CD8-positive, alpha-beta T cell (primary cell): ENCODE measurements at regions of chr13 and their contacts with region 1.

Region 1: DNA sequence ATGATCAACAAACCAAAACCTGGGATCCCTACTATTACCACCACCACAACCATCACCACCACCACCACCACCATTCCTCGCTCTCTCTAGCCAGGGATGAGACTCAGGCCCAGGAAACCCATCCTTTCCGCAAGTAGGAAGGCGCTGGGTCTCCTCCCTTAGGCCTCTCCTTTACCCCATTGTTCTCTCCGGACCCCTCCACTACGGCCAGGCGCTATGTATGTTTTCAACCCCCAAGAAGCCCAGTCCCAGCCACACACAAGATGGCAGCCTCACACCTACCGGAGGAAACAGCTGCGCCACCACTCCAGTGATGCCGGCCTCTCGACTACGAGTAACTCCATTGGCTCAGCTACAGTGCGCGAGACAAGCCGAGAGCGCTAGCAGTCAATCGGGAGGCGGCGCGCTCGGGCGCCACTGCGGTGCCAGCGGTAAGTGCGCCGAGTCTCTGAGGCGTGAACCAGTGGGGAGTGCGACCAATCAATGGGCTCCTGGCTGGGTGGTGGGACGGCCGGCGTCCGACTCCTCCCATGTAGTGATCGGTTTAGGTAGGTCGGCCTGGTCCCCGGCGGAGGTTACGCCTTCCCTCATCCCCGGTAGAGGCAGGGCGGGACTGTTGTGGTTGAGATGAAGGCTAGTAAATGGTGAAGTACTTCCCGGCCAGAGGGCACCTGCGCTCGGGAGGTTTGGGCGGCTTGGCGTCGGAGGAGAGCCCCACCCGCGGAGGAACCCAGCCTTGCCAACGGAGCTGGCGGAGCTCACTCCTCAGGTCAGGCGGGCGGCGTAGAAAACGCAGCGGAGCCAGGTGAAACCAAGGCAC is at the starts of genes CAB39L and SETDB2:
- DNase-seq: peak; percentile 97 to 100 (median 99)
- ATAC-seq: peak; percentile 89
- H3K4me3 ChIP-seq: peak within 1 kb of the TSS; percentile 72 to 76
- H3K4me3 Mint-ChIP-seq: peak within 1 kb of the TSS; percentile 93
- H3K27ac ChIP-seq: peak within 1 kb of the TSS; percentile 91 to 93
- H3K27ac Mint-ChIP-seq: peak within 1 kb of the TSS; percentile 98
- H3K4me1 ChIP-seq: peaks cover 42% of the 10 kb centered on the region
- H3K4me1 Mint-ChIP-seq: peaks cover 51% of the 10 kb centered on the region
- H3K27me3 ChIP-seq: no peaks in the 10 kb centered on the region
- H3K27me3 Mint-ChIP-seq: peaks cover 2% of the 10 kb centered on the region
- CTCF ChIP-seq: no peak
- total RNA-seq, gene CAB39L: 1.6 to 2.1 TPM
- total RNA-seq, gene SETDB2: 8.4 to 9.3 TPM

Region 2: DNA sequence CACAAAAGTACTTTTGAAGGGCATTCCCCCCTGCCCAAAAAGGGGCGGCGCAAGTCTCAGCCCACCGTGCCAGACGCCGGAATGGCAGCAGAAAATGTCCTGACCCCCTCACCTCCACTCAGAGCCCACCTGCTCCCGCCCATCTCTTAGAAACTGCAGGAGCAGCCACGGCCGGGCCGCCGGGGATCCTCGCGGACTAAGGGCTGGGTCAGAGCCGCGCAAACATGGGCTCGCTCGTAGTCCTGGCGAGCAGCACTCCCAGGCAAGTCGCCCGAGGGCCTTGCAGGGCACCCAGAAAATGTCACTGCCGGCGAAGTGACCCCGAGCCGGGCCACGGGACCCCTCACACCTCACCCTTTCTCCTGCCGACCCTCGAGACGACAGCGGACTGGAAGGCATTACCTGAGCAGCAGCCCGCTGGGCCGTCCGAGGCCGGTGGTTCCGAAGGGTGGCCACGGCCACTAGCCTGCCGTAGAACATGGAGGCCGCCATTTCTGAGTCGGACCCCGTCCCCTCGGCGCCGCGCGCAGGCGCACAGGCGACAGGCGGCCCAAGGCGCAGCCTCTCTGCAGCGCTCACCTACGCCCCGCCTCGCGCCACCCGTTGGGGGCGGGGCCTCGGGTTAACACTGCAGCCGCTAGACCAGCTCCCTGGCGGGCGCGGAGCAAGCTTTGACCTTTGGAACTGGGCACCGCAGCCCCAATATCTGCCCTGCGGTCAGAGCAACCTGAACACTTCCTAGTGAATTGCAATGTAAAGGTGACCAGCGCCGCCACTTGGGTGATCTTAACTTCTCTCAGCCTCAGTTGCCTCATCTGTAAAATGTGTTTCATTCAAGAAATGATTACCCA is 1442.9 kb before region 1 on chr13 and contains the start of gene SUCLA2:
- CTCF ChIA-PET with region 1: no interaction called
- POLR2A ChIA-PET with region 1: no interaction called
- intact Hi-C with region 1: loop called in 1 of 2 experiments (anchors 10 kb)
- DNase-seq: peak; percentile 77 to 93 (median 88)
- ATAC-seq: peak; percentile 100
- H3K4me3 ChIP-seq: peak within 1 kb of the TSS; percentile 99
- H3K4me3 Mint-ChIP-seq: peak within 1 kb of the TSS; percentile 95
- H3K27ac ChIP-seq: peak within 1 kb of the TSS; percentile 72 to 81
- H3K27ac Mint-ChIP-seq: peak within 1 kb of the TSS; percentile 91
- H3K4me1 ChIP-seq: peaks cover 16% of the 10 kb centered on the region
- H3K4me1 Mint-ChIP-seq: peaks cover 35% of the 10 kb centered on the region
- H3K27me3 ChIP-seq: no peaks in the 10 kb centered on the region
- H3K27me3 Mint-ChIP-seq: no peaks in the 10 kb centered on the region
- CTCF ChIP-seq: no peak
- total RNA-seq, gene SUCLA2: 20.8 to 22.9 TPM

Region 3: DNA sequence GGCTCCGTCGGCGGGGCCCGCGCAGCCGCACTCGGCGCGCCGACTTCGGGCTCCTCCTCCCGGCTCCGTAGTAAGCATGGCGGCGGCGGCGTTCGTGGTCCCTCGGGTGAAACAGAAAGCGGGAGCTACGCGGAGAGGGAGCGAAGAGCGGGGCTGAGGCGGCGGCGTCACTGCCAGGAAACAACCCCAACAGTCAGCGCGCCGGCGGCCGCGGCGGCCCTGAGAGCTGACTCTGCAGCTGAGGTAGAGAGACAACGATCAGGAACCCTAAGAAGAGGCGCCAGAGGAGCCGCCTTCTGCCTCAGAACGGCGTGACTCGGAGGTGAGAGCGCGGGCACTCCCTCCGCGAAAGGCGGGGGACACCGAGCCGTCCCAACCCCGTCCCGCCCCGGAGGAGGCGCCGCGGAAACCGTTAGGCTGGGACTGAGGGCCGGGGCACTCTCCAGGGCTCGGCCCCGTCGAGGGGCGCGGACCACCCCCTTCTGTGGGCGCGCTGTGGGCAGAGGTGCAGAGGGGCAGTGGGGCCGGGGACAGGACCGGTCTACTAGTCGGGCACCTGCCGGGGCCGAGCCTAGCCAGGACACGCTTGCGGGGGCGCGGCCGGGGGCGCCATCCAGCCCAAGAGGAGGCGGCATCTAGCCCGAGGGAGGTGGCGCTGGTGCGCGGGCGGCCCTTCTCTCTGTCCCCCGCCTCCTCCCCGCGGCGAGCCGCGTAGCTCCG is 467.9 kb before region 1 on chr13 and contains the start of gene FNDC3A:
- CTCF ChIA-PET with region 1: no interaction called
- POLR2A ChIA-PET with region 1: interaction called, 6 read pairs
- intact Hi-C with region 1: loop called (anchors 2 to 5 kb)
- DNase-seq: peak; percentile 70 to 93 (median 83)
- ATAC-seq: peak; percentile 70
- H3K4me3 ChIP-seq: peak within 1 kb of the TSS; percentile 79 to 80
- H3K4me3 Mint-ChIP-seq: peak within 1 kb of the TSS; percentile 97
- H3K27ac ChIP-seq: peak within 1 kb of the TSS; percentile 79 to 91
- H3K27ac Mint-ChIP-seq: peak within 1 kb of the TSS; percentile 99
- H3K4me1 ChIP-seq: peaks cover 33% of the 10 kb centered on the region
- H3K4me1 Mint-ChIP-seq: peaks cover 42% of the 10 kb centered on the region
- H3K27me3 ChIP-seq: no peaks in the 10 kb centered on the region
- H3K27me3 Mint-ChIP-seq: no peaks in the 10 kb centered on the region
- CTCF ChIP-seq: no peak
- total RNA-seq, gene FNDC3A: 27.0 to 27.7 TPM

Region 4: DNA sequence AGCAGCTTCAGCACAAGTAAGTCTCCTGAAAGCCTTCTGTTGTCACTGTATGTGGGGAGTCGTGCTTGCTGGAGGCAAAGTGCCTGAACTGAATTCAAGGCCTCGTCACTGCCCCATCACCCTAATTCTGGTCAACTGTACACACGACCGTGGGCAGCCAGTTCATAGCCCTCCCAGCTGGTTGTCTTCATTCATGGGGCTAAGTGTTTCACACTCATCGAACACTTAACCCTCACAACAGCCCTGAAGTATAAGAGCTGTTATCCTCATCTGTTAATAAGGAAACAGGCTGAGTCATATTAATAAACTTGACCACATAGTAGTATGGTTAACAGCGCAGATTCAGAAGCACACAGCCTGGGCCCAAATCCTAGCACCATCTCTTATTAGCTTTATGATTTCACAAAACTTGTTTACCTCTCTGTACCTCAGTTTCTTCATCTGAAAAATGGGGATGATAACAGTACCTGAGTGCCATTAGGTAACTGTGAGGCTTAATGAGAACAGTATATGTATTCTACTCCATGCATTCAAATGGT is 129.5 kb before region 1 on chr13:
- CTCF ChIA-PET with region 1: no interaction called
- POLR2A ChIA-PET with region 1: no interaction called
- intact Hi-C with region 1: no loop called
- DNase-seq: no peak
- ATAC-seq: no peak
- H3K4me3 ChIP-seq: no peak overlapping the region
- H3K4me3 Mint-ChIP-seq: no peak overlapping the region
- H3K27ac ChIP-seq: no peak overlapping the region
- H3K27ac Mint-ChIP-seq: no peak overlapping the region
- H3K4me1 ChIP-seq: no peaks in the 10 kb centered on the region
- H3K4me1 Mint-ChIP-seq: no peaks in the 10 kb centered on the region
- H3K27me3 ChIP-seq: no peaks in the 10 kb centered on the region
- H3K27me3 Mint-ChIP-seq: no peaks in the 10 kb centered on the region
- CTCF ChIP-seq: no peak

Region 5: GRCh38 chr13:49454388-49455006 is 10.6 kb after region 1 on chr13:
- CTCF ChIA-PET with region 1: interaction called, 4 read pairs
- POLR2A ChIA-PET with region 1: interaction called, 15 read pairs
- intact Hi-C with region 1: loop called in 1 of 2 experiments (anchors 1 kb)
- DNase-seq: peak in 2 of 9 experiments; percentile 27 to 54
- ATAC-seq: peak; percentile 77
- H3K4me3 ChIP-seq: no peak overlapping the region
- H3K4me3 Mint-ChIP-seq: peak overlapping the region; percentile 40
- H3K27ac ChIP-seq: peak overlapping the region in 1 of 2 experiments; percentile 41
- H3K27ac Mint-ChIP-seq: peak overlapping the region; percentile 61
- H3K4me1 ChIP-seq: peaks cover 11% of the 10 kb centered on the region
- H3K4me1 Mint-ChIP-seq: peaks cover 44% of the 10 kb centered on the region
- H3K27me3 ChIP-seq: no peaks in the 10 kb centered on the region
- H3K27me3 Mint-ChIP-seq: no peaks in the 10 kb centered on the region
- CTCF ChIP-seq: no peak

Region 6: DNA sequence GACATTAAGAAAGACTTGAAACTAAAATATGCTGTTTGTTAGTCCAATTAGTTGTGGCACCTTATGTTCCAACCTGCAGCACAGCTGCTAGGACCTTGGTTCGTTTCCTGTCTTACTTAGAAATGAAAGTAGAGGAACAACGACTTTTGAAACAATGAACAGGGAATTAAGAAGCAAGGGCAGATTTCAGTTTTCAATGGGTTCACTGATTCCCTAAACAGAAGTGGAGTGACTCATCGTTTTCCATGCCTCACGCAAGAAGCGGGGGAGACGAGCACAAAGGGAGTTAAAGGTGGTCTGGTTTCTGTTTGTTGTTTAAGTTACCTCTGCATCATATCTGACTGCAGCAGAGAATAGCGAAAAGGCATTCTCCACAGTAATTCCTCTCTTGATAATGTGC is 96.6 kb after region 1 on chr13:
- CTCF ChIA-PET with region 1: no interaction called
- POLR2A ChIA-PET with region 1: interaction called, 10 read pairs
- intact Hi-C with region 1: no loop called
- DNase-seq: peak in 3 of 9 experiments; percentile 3 to 48 (median 16)
- ATAC-seq: peak; percentile 42
- H3K4me3 ChIP-seq: peak overlapping the region; percentile 10 to 23
- H3K4me3 Mint-ChIP-seq: peak overlapping the region; percentile 79
- H3K27ac ChIP-seq: peak overlapping the region in 1 of 2 experiments; percentile 46
- H3K27ac Mint-ChIP-seq: peak overlapping the region; percentile 89
- H3K4me1 ChIP-seq: peaks cover 15% of the 10 kb centered on the region
- H3K4me1 Mint-ChIP-seq: peaks cover 18% of the 10 kb centered on the region
- H3K27me3 ChIP-seq: no peaks in the 10 kb centered on the region
- H3K27me3 Mint-ChIP-seq: no peaks in the 10 kb centered on the region
- CTCF ChIP-seq: no peak

Region 7: GRCh38 chr13:49792550-49793324 is 348.8 kb after region 1 on chr13 and contains the start of gene KPNA3:
- CTCF ChIA-PET with region 1: no interaction called
- POLR2A ChIA-PET with region 1: interaction called, 29 read pairs
- intact Hi-C with region 1: loop called in 1 of 2 experiments (anchors 2 kb)
- DNase-seq: peak; percentile 92 to 98 (median 96)
- ATAC-seq: peak; percentile 91
- H3K4me3 ChIP-seq: peak within 1 kb of the TSS; percentile 83 to 99
- H3K4me3 Mint-ChIP-seq: peak within 1 kb of the TSS; percentile 95
- H3K27ac ChIP-seq: peak within 1 kb of the TSS; percentile 79 to 89
- H3K27ac Mint-ChIP-seq: peak within 1 kb of the TSS; percentile 96
- H3K4me1 ChIP-seq: peaks cover 21% of the 10 kb centered on the region
- H3K4me1 Mint-ChIP-seq: peaks cover 34% of the 10 kb centered on the region
- H3K27me3 ChIP-seq: peaks cover 0 to 7% of the 10 kb centered on the region in 2 experiments
- H3K27me3 Mint-ChIP-seq: peaks cover 9% of the 10 kb centered on the region
- CTCF ChIP-seq: no peak
- total RNA-seq, gene KPNA3: 22.3 to 23.5 TPM

Region 8: GRCh38 chr13:50026788-50027473 is 583.0 kb after region 1 on chr13:
- CTCF ChIA-PET with region 1: no interaction called
- POLR2A ChIA-PET with region 1: no interaction called
- intact Hi-C with region 1: no loop called
- DNase-seq: no peak
- ATAC-seq: no peak
- H3K4me3 ChIP-seq: no peak overlapping the region
- H3K4me3 Mint-ChIP-seq: no peak overlapping the region
- H3K27ac ChIP-seq: no peak overlapping the region
- H3K27ac Mint-ChIP-seq: no peak overlapping the region
- H3K4me1 ChIP-seq: no peaks in the 10 kb centered on the region
- H3K4me1 Mint-ChIP-seq: no peaks in the 10 kb centered on the region
- H3K27me3 ChIP-seq: no peaks in the 10 kb centered on the region
- H3K27me3 Mint-ChIP-seq: no peaks in the 10 kb centered on the region
- CTCF ChIP-seq: no peak

Region 9: DNA sequence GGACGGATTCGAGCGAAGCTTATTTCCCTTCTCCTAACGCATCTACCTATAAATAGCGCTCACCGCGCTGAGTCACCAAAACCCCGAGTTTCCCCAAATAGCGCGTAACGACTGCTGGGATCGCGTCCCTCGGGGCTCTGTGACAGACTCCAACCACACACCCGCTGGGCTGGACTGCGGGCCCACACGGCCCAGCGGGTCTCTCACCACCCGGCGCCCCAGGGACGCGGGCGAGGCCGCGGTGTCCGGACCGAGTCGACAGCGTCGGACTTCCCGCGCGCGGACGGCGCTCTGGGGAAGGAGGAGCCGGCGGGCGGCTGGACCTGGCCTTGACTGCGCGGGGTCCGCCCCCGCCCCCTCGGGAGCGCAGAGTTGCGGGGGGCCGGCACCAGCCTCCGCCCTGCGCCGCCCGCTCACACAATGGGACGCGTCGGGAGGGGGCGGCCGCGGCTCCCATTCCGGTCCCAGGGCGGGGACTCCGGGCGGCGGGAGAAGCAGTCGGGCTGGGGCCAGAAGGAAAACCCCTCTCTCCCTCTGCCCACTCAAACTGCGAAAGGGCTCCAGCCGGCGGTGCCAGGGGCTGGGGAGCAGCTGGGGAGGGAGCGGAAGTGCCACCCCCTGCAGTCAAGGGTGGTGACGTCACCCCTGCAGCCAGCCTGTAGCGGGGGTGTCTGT is 680.1 kb after region 1 on chr13:
- CTCF ChIA-PET with region 1: no interaction called
- POLR2A ChIA-PET with region 1: no interaction called
- intact Hi-C with region 1: loop called (anchors 1 to 2 kb)
- DNase-seq: peak in 8 of 9 experiments; percentile 43 to 91 (median 72)
- ATAC-seq: peak; percentile 65
- H3K4me3 ChIP-seq: peak overlapping the region; percentile 87 to 93
- H3K4me3 Mint-ChIP-seq: peak overlapping the region; percentile 90
- H3K27ac ChIP-seq: peak overlapping the region; percentile 90 to 92
- H3K27ac Mint-ChIP-seq: peak overlapping the region; percentile 96
- H3K4me1 ChIP-seq: peaks cover 24% of the 10 kb centered on the region
- H3K4me1 Mint-ChIP-seq: peaks cover 44% of the 10 kb centered on the region
- H3K27me3 ChIP-seq: peaks cover 12 to 19% of the 10 kb centered on the region in 2 experiments
- H3K27me3 Mint-ChIP-seq: peaks cover 15% of the 10 kb centered on the region
- CTCF ChIP-seq: no peak